ENCODE measurements at regions of chr10 and their contacts with region 1.

Region 1: DNA sequence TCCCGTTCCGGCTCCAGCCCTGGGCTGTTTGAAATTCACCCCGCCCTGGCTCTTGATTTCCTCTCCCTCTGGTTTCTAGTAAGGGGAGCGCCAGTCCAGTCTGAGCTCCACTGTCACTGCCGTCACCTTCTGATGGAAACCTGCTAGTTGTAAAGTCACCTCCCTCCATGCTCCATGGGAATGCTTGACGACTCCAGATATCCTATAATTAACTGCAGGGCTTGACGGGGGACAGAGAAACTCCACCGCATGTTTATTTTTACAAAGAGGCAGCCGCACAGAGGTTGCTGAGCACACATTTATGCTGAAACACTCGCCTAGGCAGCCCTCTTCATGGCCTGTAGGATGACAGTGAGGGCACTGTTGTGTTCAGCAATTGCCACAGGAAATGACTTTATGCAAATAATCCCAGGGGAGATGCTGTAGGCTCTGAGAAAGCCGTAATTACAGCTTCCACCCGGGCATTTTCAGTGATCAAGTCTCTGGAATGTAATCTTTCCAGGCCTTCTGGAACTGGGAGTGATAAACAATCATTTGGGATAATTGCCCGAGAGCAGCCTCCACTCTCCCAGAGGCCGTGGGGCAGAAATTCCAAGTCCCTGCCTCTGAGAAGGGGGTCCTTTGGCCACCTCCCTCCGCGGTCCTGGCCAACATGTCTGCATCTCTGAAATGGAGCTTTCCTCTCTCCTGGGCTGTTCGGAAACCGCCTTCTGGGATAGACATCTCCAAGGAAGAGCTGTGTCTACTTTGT is 300.5 kb downstream of the KLF6 start:
- DNase-seq: no peak
- H3K4me3 Mint-ChIP-seq: no peak overlapping the region
- H3K27ac Mint-ChIP-seq: no peak overlapping the region
- H3K4me1 Mint-ChIP-seq: peaks cover 26% of the 10 kb centered on the region
- H3K27me3 Mint-ChIP-seq: no peaks in the 10 kb centered on the region

Region 2: DNA sequence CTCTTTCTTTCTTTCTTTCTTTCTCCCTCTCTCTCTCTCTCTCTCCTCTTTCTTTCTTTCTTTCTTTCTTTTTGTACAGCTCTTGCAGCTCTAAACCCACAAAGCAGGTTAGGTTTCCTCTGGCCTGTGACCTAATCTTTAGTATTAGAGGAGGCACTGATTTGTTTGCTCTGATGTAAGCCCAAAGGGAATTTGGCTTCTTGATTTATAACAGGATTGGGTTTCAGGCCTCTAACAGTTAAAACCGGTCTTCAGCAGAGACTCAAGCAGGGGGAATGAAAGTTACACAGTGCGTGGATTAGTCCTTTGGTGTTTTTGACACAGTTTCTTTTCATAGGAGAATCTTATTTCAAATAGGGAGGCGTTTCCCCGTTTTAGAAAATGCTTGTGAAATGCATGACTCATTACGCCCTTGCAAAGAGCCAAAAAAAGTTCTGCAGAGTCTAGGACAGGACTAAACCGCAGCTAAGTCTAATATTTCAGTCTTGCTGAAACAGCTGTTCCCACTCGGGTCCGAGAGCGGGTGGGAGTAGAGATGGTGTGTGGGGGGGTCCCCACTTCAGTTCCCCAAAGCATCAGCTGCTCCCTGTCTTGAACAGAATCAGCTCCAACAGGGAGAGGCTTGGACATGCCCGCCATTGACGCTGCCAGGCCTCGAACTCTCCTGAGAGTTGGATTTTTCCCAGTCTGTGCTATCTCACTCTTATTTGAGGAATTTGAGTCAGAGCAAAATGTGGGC is 15.4 kb before region 1 on chr10:
- CTCF ChIA-PET with region 1: interaction called, 3 read pairs
- intact Hi-C with region 1: loop called (anchors 2 kb)
- DNase-seq: no peak
- H3K4me3 Mint-ChIP-seq: no peak overlapping the region
- H3K27ac Mint-ChIP-seq: no peak overlapping the region
- H3K4me1 Mint-ChIP-seq: peaks cover 43% of the 10 kb centered on the region
- H3K27me3 Mint-ChIP-seq: no peaks in the 10 kb centered on the region

Region 3: GRCh38 chr10:3606309-3606708 is 121.8 kb after region 1 on chr10:
- CTCF ChIA-PET with region 1: no interaction called
- intact Hi-C with region 1: no loop called
- DNase-seq: no peak
- H3K4me3 Mint-ChIP-seq: no peak overlapping the region
- H3K27ac Mint-ChIP-seq: peak overlapping the region; percentile 40
- H3K4me1 Mint-ChIP-seq: peaks cover 10% of the 10 kb centered on the region
- H3K27me3 Mint-ChIP-seq: peaks cover 2% of the 10 kb centered on the region